ENCODE measurements at regions of chr10 and their contacts with region 1.

Region 1: DNA sequence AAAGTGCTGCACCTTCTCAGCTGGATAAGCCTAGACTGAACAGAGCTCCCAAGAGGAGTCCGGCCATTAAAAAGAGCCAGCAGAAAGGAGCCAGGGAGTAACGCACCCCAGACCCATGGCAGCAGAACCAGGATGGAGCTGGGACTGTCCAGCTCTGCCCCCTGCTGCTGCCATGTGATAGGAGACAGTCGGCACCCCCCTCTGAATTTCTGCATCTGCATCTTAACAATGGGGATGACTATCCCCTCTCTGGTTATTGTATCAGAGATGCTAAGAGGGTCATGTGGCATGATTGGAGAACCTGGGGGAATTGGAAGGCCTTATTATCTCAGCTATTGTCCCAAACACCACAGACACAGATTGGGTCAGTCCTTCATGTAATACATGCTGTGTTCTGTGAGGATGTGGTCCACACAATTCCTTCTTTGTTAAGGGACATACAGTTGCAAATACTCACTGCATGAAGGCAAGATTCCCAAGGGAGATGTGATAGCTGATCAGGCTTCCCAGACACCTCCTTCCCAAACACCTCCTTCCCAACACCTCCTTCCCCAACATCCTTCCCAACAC is 29.3 kb downstream of the PLEKHS1 start:
- DNase-seq: peak in 1 of 2 experiments; percentile 40
- H3K4me3 ChIP-seq: no peak overlapping the region
- H3K4me3 Mint-ChIP-seq: no peak overlapping the region
- H3K27ac Mint-ChIP-seq: no peak overlapping the region
- H3K4me1 ChIP-seq: no peaks in the 10 kb centered on the region
- H3K4me1 Mint-ChIP-seq: no peaks in the 10 kb centered on the region
- H3K27me3 ChIP-seq: no peaks in the 10 kb centered on the region
- H3K27me3 Mint-ChIP-seq: no peaks in the 10 kb centered on the region
- CTCF ChIP-seq: peak; percentile 24 to 44

Region 2: GRCh38 chr10:113704637-113705343 is 76.0 kb before region 1 on chr10:
- CTCF ChIA-PET with region 1: interaction called, 3 read pairs
- POLR2A ChIA-PET with region 1: no interaction called
- intact Hi-C with region 1: loop called (anchors 1 kb)
- DNase-seq: peak in 1 of 2 experiments; percentile 45
- H3K4me3 ChIP-seq: no peak overlapping the region
- H3K4me3 Mint-ChIP-seq: no peak overlapping the region
- H3K27ac Mint-ChIP-seq: no peak overlapping the region
- H3K4me1 ChIP-seq: no peaks in the 10 kb centered on the region
- H3K4me1 Mint-ChIP-seq: no peaks in the 10 kb centered on the region
- H3K27me3 ChIP-seq: no peaks in the 10 kb centered on the region
- H3K27me3 Mint-ChIP-seq: no peaks in the 10 kb centered on the region
- CTCF ChIP-seq: peak; percentile 71 to 76

Region 3: GRCh38 chr10:113735921-113736320 is 44.8 kb before region 1 on chr10:
- CTCF ChIA-PET with region 1: interaction called, 5 read pairs
- POLR2A ChIA-PET with region 1: no interaction called
- intact Hi-C with region 1: loop called (anchors 1 kb)
- DNase-seq: peak; percentile 61 to 64
- H3K4me3 ChIP-seq: no peak overlapping the region
- H3K4me3 Mint-ChIP-seq: no peak overlapping the region
- H3K27ac Mint-ChIP-seq: no peak overlapping the region
- H3K4me1 ChIP-seq: peaks cover 9% of the 10 kb centered on the region
- H3K4me1 Mint-ChIP-seq: no peaks in the 10 kb centered on the region
- H3K27me3 ChIP-seq: no peaks in the 10 kb centered on the region
- H3K27me3 Mint-ChIP-seq: no peaks in the 10 kb centered on the region
- CTCF ChIP-seq: peak; percentile 22 to 46

Measured in Caco-2 (cell line).